ENCODE measurements at regions of chr3 and their contacts with region 1.

Region 1: DNA sequence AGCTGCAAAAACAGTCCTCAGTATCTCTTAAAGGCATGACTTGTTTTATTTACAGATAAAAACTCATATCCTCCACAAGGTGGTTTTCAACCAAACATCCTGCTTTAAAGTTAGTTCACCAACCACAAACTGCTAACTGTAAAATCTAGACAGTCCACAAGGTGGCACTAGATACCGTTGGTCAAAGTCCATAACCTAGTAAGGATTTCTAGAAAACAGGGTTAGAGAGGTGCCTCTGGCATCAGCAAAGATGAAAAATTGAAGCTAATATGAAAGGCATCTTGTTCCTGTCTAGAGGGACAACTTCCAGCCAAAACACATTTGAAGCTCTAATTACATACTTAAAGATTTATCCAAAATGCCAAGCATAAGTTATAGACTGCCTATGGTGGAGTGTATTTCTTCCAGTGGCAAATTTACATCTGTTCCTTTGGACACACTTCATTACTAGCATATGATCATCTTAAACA is 56.0 kb downstream of the ZMAT3 start:
- H3K4me3 Mint-ChIP-seq: no peak overlapping the region
- H3K27ac Mint-ChIP-seq: no peak overlapping the region
- H3K4me1 Mint-ChIP-seq: peaks cover 2% of the 10 kb centered on the region
- H3K27me3 Mint-ChIP-seq: peaks cover 1% of the 10 kb centered on the region

Region 2: GRCh38 chr3:179071550-179072397 is 56.2 kb after region 1 on chr3 and contains the start of gene ZMAT3:
- intact Hi-C with region 1: loop called (anchors 5 kb)
- H3K4me3 Mint-ChIP-seq: peak within 1 kb of the TSS; percentile 93
- H3K27ac Mint-ChIP-seq: peak within 1 kb of the TSS; percentile 88
- H3K4me1 Mint-ChIP-seq: peaks cover 16% of the 10 kb centered on the region
- H3K27me3 Mint-ChIP-seq: peaks cover 2% of the 10 kb centered on the region